ENCODE measurements at regions of chr10 and their contacts with region 1.

Region 1: GRCh38 chr10:11515596-11516430 is 95.6 kb downstream of the USP6NL start:
- DNase-seq: peak; percentile 31 to 36
- ATAC-seq: peak; percentile 92

Region 2: GRCh38 chr10:11161096-11161495 is 354.7 kb before region 1 on chr10:
- intact Hi-C with region 1: no loop called
- DNase-seq: peak in 1 of 2 donors; percentile 40
- ATAC-seq: no peak

Region 3: DNA sequence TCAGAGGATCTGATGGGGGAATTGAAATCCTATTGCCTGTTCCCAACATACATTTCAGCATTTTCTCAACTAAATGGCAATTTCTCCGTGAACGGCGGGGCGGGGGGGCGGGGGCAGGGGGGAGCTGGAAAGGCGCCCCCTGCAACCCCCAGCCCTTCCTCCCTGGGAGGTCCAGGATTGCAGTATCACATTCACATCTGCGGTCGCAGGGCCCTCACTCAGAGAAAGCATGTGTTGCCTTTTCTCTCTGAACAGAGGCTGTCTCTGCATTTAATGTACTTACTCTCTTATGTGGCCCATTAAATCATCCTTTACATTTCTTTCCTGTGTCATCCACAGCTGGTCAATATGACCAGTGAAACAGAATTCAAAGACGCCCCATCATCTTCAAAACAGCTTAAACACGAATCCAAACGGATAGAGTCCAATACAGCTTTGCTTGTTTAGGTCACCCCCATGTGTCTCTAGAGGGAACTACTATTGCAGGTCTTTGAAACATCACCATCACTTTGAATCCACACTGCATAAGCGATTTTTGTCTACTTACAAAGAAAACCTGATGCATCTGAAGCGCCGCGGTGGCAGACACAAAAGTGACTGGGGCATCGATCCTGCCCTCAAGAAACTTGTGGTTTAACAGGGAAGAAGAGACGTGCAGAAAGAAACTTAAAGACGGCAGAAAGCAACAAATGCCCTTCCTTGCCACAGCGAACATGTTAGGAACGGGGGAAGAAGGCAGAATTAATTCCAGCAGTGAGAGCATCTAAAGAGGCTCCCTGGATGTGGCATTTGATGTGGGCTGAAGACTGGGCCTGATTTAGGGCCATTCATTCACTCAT is 209.3 kb after region 1 on chr10:
- intact Hi-C with region 1: loop called (anchors 5 to 10 kb)
- DNase-seq: no peak
- ATAC-seq: peak; percentile 91

Region 4: GRCh38 chr10:11742005-11742778 is 226.4 kb after region 1 on chr10 and contains the start of gene ECHDC3:
- intact Hi-C with region 1: no loop called
- DNase-seq: peak; percentile 47 to 56
- ATAC-seq: peak; percentile 87
- total RNA-seq, gene ECHDC3: 10.2 to 10.5 TPM

Region 5: GRCh38 chr10:11757821-11758463 is 242.1 kb after region 1 on chr10:
- intact Hi-C with region 1: loop called in 1 of 2 experiments (anchors 2 kb)
- DNase-seq: peak; percentile 82 to 91
- ATAC-seq: peak; percentile 99